GM23248 (cell line): ENCODE measurements at regions of chr4 and their contacts with region 1.

Region 1: DNA sequence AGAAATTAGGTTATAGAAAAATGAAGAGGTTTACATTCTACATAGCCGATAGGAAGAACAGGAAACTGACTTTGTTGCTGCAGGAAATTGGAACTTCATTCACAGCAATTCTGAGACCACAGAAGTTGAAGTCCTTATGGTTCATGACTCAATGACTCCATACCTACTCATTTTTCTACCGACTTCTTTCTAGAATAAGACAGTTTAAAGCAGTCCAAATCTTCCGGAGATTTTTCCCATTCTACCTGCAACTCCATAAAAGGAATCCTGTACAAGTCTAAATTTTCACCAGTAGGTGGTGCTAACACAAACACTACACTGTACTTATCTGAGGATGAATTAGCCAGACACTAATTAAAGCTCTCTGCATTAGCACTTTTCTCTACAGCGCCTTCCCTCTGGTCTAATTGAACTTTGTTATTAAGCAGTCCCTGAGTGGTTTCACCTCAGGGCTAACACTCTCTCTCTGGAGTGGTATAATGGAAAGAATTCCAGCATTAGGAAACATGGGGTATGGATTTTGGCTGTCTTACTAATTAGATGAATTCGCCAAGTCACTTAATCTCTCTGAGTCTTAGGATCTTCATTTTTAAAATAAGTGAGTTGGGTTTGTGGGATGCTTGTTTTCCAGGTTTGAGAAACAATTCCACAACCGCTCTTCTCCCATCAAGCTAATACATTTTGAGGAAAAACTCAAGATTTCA is 167.9 kb downstream of the SMIM20 start:
- DNase-seq: peak; percentile 48
- H3K4me3 ChIP-seq: no peak overlapping the region
- H3K27ac ChIP-seq: no peak overlapping the region
- H3K4me1 ChIP-seq: no peaks in the 10 kb centered on the region
- H3K27me3 ChIP-seq: peaks cover 75% of the 10 kb centered on the region

Region 2: DNA sequence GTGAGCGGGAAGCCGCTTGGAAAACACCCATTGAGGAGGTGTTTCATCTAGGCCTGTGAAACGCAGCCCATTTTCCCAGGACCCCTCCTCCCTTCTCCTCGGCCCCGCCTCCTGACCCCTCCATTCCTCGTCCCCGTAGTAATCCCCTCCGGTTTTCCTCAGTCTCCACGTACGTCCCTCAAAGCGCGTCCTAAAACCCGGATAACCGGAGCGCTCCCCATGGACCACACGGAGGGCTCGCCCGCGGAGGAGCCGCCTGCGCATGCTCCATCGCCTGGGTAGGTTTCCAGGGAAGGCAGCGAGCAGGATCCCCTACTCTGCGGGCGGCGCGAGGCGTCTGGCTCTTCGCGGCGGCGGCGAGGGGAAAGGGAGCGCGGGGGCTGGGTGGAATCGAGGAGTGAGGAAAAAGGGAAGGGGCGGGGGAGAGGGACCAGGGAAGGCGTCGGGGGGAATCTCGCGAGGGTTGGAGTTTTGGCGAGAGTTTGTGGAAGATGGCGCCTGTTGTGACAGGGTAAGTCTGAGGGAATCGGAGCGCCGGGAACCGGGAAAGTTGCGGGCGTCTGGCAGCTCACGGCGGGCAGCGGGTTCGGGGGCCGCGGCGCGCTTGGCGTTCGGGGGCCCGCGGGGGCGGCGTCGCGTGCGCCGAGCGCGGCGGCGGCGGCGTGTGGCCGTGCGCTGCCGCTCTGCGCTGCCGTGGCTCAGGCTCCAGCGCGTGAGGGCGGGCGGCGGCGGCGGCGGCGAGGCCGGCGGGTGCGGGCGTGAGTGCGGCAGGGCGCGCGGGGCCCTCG is 238.8 kb after region 1 on chr4 and contains the start of gene RBPJ:
- in situ Hi-C with region 1: loop called (anchors 10 kb)
- DNase-seq: peak; percentile 97
- H3K4me3 ChIP-seq: peak within 1 kb of the TSS; percentile 94
- H3K27ac ChIP-seq: peak within 1 kb of the TSS; percentile 99
- H3K4me1 ChIP-seq: peaks cover 35% of the 10 kb centered on the region
- H3K27me3 ChIP-seq: no peaks in the 10 kb centered on the region
- total RNA-seq, gene RBPJ: 70.7 and 75.8 TPM in 2 replicates